ENCODE measurements at regions of chr4 and their contacts with region 1.

Region 1: DNA sequence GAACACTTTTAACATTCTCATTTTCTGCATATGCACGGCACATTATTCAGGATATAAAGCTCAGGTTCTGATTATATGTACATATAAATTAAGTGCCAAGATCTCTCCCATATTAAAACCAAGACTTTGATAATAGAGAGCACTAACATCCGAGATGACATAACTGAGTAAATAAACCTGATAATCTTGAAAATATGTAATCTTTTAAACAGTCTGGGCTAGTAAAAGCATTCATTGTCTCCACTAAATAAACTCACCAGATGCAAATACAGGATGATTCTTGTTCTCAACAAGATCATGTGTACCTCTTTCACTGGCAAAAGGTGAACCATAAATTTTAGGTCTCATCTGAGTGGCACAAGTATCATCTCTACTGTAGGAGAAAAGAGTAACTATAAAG is 942.2 kb downstream of the TRAM1L1 start:
- DNase-seq: peak; percentile 67
- ATAC-seq: peak; percentile 97
- H3K4me3 ChIP-seq: no peak overlapping the region
- H3K27ac ChIP-seq: peak overlapping the region; percentile 48
- H3K4me1 ChIP-seq: peaks cover 14% of the 10 kb centered on the region
- H3K27me3 ChIP-seq: no peaks in the 10 kb centered on the region
- CTCF ChIP-seq: no peak

Region 2: GRCh38 chr4:115119804-115120352 is 1023.3 kb before region 1 on chr4:
- CTCF ChIA-PET with region 1: no interaction called
- POLR2A ChIA-PET with region 1: no interaction called
- intact Hi-C with region 1: loop called (anchors 10 kb)
- DNase-seq: no peak
- ATAC-seq: no peak
- H3K4me3 ChIP-seq: no peak overlapping the region
- H3K27ac ChIP-seq: no peak overlapping the region
- H3K4me1 ChIP-seq: no peaks in the 10 kb centered on the region
- H3K27me3 ChIP-seq: no peaks in the 10 kb centered on the region
- CTCF ChIP-seq: 0 out of 2 replicates have a peak, but pooled peaks have one; percentile 17

Region 3: DNA sequence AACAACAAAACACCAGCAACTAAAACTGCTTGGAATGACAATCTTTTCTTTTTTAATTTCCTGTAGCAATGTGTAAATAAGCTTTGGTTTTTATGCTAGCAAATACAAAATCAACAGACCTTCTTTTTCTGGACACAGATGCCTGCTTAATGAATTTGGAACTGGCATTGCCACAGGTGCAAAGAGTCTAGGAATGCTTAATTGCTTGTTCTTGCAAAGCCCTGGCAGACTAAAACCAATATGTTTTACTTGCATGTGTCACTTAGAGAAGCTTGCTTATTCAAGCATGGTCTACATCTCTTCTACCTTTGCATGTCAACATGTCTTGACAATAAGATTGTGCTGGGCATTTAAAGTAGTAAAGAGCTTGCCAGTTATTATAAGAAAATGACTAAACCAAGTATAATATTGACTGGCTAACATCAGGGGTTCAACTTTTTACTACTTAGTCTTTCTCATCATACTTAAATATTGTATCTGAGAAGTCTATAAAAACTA is 373.1 kb before region 1 on chr4:
- CTCF ChIA-PET with region 1: no interaction called
- POLR2A ChIA-PET with region 1: no interaction called
- intact Hi-C with region 1: no loop called
- DNase-seq: no peak
- ATAC-seq: no peak
- H3K4me3 ChIP-seq: no peak overlapping the region
- H3K27ac ChIP-seq: no peak overlapping the region
- H3K4me1 ChIP-seq: no peaks in the 10 kb centered on the region
- H3K27me3 ChIP-seq: no peaks in the 10 kb centered on the region
- CTCF ChIP-seq: no peak

Region 4: DNA sequence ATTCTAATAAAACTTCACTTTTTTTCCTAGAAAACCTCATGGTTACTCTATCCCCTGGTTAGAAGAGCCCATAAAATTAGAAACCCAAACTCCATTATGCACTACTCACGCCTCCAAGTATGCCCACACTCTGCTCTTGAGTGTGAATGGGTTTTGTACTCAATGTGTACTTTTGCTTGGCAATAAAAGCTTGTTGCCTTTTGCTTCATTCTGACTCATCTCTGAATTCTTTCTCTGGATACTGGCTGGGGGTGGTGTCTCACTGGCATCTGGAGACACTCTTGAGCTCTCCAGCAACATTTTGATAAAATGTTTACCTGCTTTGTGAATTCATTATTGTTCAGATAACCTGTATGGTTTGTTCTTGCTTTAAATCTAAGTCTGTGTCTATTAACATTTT is 21.1 kb before region 1 on chr4:
- CTCF ChIA-PET with region 1: no interaction called
- POLR2A ChIA-PET with region 1: no interaction called
- intact Hi-C with region 1: loop called (anchors 1 kb)
- DNase-seq: peak; percentile 79
- ATAC-seq: peak; percentile 96
- H3K4me3 ChIP-seq: no peak overlapping the region
- H3K27ac ChIP-seq: peak overlapping the region; percentile 73
- H3K4me1 ChIP-seq: peaks cover 22% of the 10 kb centered on the region
- H3K27me3 ChIP-seq: no peaks in the 10 kb centered on the region
- CTCF ChIP-seq: no peak